Activated T-helper 1 cell treated with anti-CD3 and anti-CD28 coated beads, Interleukin-12 subunit alpha, Interleukin-12 subunit beta, Interleukin-2, Interleukin-4 antibody, amounts not matched to agents 30 ng/mL and 10 ng/mL and 1 ng/mL, durations not matched to agents 14 hours and 24 hours and 36 hours (primary cell): ENCODE measurements at regions of chr16 and their contacts with region 1.

Region 1: GRCh38 chr16:48556913-48557351 is 53.0 kb downstream of the N4BP1 start:
- DNase-seq: peak; percentile 20
- H3K4me3 Mint-ChIP-seq: peak overlapping the region; percentile 62
- H3K27ac Mint-ChIP-seq: peak overlapping the region; percentile 92
- H3K4me1 Mint-ChIP-seq: peaks cover 86% of the 10 kb centered on the region
- H3K27me3 Mint-ChIP-seq: no peaks in the 10 kb centered on the region

Region 2: GRCh38 chr16:46822270-46822669 is 1734.7 kb before region 1 on chr16:
- intact Hi-C with region 1: loop called (anchors 10 kb)
- DNase-seq: no peak
- H3K4me3 Mint-ChIP-seq: no peak overlapping the region
- H3K27ac Mint-ChIP-seq: no peak overlapping the region
- H3K4me1 Mint-ChIP-seq: peaks cover 34% of the 10 kb centered on the region
- H3K27me3 Mint-ChIP-seq: no peaks in the 10 kb centered on the region

Region 3: GRCh38 chr16:48353565-48354163 is 203.3 kb before region 1 on chr16:
- intact Hi-C with region 1: loop called (anchors 5 kb)
- DNase-seq: peak; percentile 62
- H3K4me3 Mint-ChIP-seq: no peak overlapping the region
- H3K27ac Mint-ChIP-seq: peak overlapping the region; percentile 32
- H3K4me1 Mint-ChIP-seq: peaks cover 15% of the 10 kb centered on the region
- H3K27me3 Mint-ChIP-seq: no peaks in the 10 kb centered on the region

Region 4: GRCh38 chr16:48511071-48511540 is 45.8 kb before region 1 on chr16:
- intact Hi-C with region 1: no loop called
- DNase-seq: no peak
- H3K4me3 Mint-ChIP-seq: no peak overlapping the region
- H3K27ac Mint-ChIP-seq: no peak overlapping the region
- H3K4me1 Mint-ChIP-seq: no peaks in the 10 kb centered on the region
- H3K27me3 Mint-ChIP-seq: peaks cover 8% of the 10 kb centered on the region

Region 5: DNA sequence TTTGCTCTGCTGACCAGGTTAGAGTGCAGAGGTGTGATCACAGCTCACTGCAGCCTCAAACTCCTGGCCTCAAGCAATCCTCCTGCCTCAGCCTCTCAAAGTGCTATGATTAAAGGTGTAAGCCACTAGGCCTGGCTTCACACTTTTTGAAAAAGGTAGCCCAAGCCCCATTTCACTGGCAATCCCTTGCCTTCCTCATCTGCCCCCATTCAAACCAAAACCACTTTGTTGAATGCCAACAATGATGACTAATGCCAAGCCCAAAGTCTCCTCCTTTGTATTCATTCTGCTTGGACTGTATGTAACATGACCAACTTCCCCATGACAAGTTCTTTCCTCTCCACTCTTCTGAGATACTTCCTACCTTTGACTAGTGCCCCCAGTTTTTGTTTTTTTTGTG is 20.0 kb after region 1 on chr16:
- intact Hi-C with region 1: loop called (anchors 2 kb)
- DNase-seq: no peak
- H3K4me3 Mint-ChIP-seq: peak overlapping the region; percentile 38
- H3K27ac Mint-ChIP-seq: peak overlapping the region; percentile 84
- H3K4me1 Mint-ChIP-seq: peaks cover 68% of the 10 kb centered on the region
- H3K27me3 Mint-ChIP-seq: no peaks in the 10 kb centered on the region

Region 6: GRCh38 chr16:48623304-48624016 is 66.5 kb after region 1 on chr16:
- intact Hi-C with region 1: loop called (anchors 1 kb)
- DNase-seq: peak; percentile 77
- H3K4me3 Mint-ChIP-seq: peak overlapping the region; percentile 81
- H3K27ac Mint-ChIP-seq: peak overlapping the region; percentile 72
- H3K4me1 Mint-ChIP-seq: peaks cover 42% of the 10 kb centered on the region
- H3K27me3 Mint-ChIP-seq: peaks cover 8% of the 10 kb centered on the region